ENCODE measurements at regions of chr17 and their contacts with region 1.

Region 1: GRCh38 chr17:20315821-20316220 is 151.5 kb downstream of the LGALS9B start:
- DNase-seq: no peak
- H3K4me3 Mint-ChIP-seq: no peak overlapping the region
- H3K27ac Mint-ChIP-seq: peak overlapping the region; percentile 17
- H3K4me1 Mint-ChIP-seq: peaks cover under 1% of the 10 kb centered on the region
- H3K27me3 Mint-ChIP-seq: no peaks in the 10 kb centered on the region

Region 2: GRCh38 chr17:20226814-20227482 is 88.9 kb before region 1 on chr17:
- CTCF ChIA-PET with region 1: interaction called, 23 read pairs
- POLR2A ChIA-PET with region 1: no interaction called
- DNase-seq: peak; percentile 85
- H3K4me3 Mint-ChIP-seq: no peak overlapping the region
- H3K27ac Mint-ChIP-seq: no peak overlapping the region
- H3K4me1 Mint-ChIP-seq: peaks cover 18% of the 10 kb centered on the region
- H3K27me3 Mint-ChIP-seq: no peaks in the 10 kb centered on the region